ENCODE measurements at regions of chr4 and their contacts with region 1.

Region 1: GRCh38 chr4:78119698-78120097 is 62.6 kb downstream of the FRAS1 start:
- DNase-seq: no peak
- H3K4me3 ChIP-seq: no peak overlapping the region
- H3K27ac ChIP-seq: no peak overlapping the region
- H3K4me1 ChIP-seq: no peaks in the 10 kb centered on the region
- H3K27me3 ChIP-seq: no peaks in the 10 kb centered on the region
- CTCF ChIP-seq: no peak
- EP300 ChIP-seq: no peak
- POLR2A ChIP-seq: no peak

Region 2: GRCh38 chr4:78149751-78150542 is 30.2 kb after region 1 on chr4:
- in situ Hi-C with region 1: no loop called
- intact Hi-C with region 1: loop called (anchors 1 kb)
- DNase-seq: no peak
- H3K4me3 ChIP-seq: no peak overlapping the region
- H3K27ac ChIP-seq: no peak overlapping the region
- H3K4me1 ChIP-seq: peaks cover 0 to 12% (median 1%) of the 10 kb centered on the region in 4 donors
- H3K27me3 ChIP-seq: no peaks in the 10 kb centered on the region
- CTCF ChIP-seq: no peak
- EP300 ChIP-seq: no peak
- POLR2A ChIP-seq: no peak

Region 3: DNA sequence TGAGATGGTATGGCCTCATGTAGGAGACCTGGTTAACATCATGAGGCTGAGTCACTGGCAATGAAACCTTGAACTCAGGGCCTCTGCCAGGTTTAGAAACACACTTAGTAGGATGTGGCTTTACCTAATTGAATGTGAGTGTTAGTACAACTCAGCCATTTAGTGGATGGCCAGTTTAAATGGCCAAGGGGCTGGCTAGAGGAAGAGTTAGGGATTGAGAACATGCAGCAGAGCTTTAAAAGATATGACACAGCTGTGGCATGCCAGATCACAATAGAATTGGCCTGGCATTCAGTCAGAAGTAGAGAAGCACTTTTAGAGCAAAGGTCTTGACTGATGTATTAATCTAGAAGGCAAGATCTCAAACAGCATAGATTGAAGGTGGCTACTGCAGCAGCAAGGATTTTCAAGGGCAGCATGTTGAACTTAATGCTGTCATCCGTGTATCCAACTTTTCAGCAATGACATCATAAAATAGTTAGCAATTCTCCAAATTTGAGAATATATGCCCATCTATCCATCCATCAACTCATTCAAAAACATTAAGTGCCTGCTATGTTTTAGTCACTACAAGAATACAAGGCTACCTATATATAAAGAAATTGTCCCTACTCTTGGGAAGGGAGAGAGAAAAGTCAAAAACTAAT is 107.8 kb after region 1 on chr4:
- in situ Hi-C with region 1: no loop called
- intact Hi-C with region 1: no loop called
- DNase-seq: no peak
- H3K4me3 ChIP-seq: no peak overlapping the region
- H3K27ac ChIP-seq: no peak overlapping the region
- H3K4me1 ChIP-seq: no peaks in the 10 kb centered on the region
- H3K27me3 ChIP-seq: no peaks in the 10 kb centered on the region
- CTCF ChIP-seq: no peak
- EP300 ChIP-seq: no peak
- POLR2A ChIP-seq: no peak